Activated CD4-positive, alpha-beta T cell treated with anti-CD3 and anti-CD28 coated beads for 36 hours (primary cell): ENCODE measurements at regions of chr5 and their contacts with region 1.

Region 1: DNA sequence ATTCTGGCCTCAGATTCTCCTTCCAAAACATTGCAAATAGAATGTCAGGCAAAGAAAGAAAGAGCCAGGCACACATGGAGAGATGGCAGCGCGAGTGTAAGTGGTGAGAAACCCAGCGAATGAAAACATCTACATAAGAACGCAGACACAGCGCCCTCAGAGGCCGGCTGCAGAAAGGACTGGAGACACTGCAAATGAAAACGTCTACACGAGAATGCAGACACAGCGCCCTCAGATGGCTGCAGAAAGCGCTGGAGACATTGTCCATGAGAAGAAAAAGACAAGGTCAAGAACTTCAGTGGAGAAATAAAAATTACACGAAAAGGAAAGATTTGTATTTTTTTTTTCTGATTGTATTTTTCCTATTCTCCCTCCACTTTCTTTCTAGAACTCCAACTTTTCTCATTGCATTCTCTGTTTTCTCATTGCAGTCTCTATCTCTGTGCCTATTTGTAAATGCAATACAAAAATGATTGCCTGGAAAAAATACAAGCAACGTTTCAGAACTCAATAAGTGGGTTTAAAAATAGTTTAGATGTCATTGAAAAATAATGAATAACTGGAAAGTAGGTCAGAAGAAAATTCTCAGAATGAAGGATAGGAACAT is 117.9 kb upstream of the LPCAT1 start:
- DNase-seq: peak; percentile 90
- ATAC-seq: peak; percentile 94
- H3K4me3 Mint-ChIP-seq: no peak overlapping the region
- H3K27ac Mint-ChIP-seq: no peak overlapping the region
- H3K4me1 Mint-ChIP-seq: peaks cover 3% of the 10 kb centered on the region
- H3K27me3 Mint-ChIP-seq: peaks cover 23% of the 10 kb centered on the region

Region 2: GRCh38 chr5:1167728-1168709 is 473.6 kb before region 1 on chr5:
- CTCF ChIA-PET with region 1: interaction called, 8 read pairs
- POLR2A ChIA-PET with region 1: no interaction called
- intact Hi-C with region 1: loop called (anchors 1 kb)
- DNase-seq: peak; percentile 80
- ATAC-seq: peak; percentile 85
- H3K4me3 Mint-ChIP-seq: peak overlapping the region; percentile 38
- H3K27ac Mint-ChIP-seq: no peak overlapping the region
- H3K4me1 Mint-ChIP-seq: peaks cover 8% of the 10 kb centered on the region
- H3K27me3 Mint-ChIP-seq: peaks cover 10% of the 10 kb centered on the region

Region 3: GRCh38 chr5:1359713-1360112 is 281.9 kb before region 1 on chr5:
- CTCF ChIA-PET with region 1: no interaction called
- POLR2A ChIA-PET with region 1: interaction called, 12 read pairs
- intact Hi-C with region 1: no loop called
- DNase-seq: no peak
- ATAC-seq: no peak
- H3K4me3 Mint-ChIP-seq: no peak overlapping the region
- H3K27ac Mint-ChIP-seq: no peak overlapping the region
- H3K4me1 Mint-ChIP-seq: no peaks in the 10 kb centered on the region
- H3K27me3 Mint-ChIP-seq: peaks cover 8% of the 10 kb centered on the region

Region 4: DNA sequence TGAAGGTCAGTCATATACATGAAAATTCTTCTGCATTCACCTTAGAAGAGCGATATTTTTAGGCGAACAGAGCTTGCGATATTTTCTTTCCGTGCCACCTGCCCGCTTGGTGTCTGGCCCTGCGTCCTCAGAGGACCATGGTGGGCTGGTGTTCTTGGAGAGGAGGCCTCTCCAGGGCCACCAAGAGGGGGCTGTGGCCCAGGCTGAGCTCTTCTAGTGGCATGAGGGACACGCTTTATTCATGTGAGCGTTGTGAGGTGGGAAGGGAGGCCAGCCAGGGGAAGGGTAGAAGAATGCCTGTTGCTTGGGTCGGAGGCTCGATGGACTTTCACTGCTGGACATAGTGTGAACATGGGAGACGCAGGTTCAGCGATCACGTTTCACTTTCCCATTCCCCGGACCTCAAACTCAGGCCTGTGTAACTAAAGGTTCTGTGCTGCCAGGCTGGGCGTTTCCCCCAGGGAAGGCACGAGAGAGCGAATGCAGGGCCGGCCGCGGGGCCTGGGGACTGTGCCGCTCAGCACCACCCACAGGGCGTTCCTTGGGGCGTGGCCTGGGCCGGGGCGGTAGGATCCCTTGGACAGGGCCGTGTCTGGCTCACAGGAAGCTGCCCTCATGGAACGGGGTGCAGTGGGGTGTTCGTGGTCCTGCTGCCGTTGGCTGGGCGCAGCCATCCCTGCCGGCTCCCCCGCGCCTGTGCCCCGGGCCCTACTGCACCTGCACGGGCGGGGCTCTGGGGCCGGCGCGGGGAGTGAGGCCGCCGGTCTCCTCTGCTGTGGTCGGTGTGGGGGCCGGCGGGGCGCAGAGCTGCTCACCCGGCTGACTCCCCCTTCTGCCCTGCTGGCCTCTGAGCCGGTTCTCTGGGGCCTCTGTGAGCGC is 256.0 kb before region 1 on chr5:
- CTCF ChIA-PET with region 1: interaction called, 18 read pairs
- POLR2A ChIA-PET with region 1: no interaction called
- intact Hi-C with region 1: loop called (anchors 1 to 2 kb)
- DNase-seq: peak; percentile 89
- ATAC-seq: peak; percentile 95
- H3K4me3 Mint-ChIP-seq: peak overlapping the region; percentile 87
- H3K27ac Mint-ChIP-seq: peak overlapping the region; percentile 90
- H3K4me1 Mint-ChIP-seq: peaks cover 23% of the 10 kb centered on the region
- H3K27me3 Mint-ChIP-seq: peaks cover 4% of the 10 kb centered on the region

Region 5: GRCh38 chr5:1536322-1536845 is 105.3 kb before region 1 on chr5:
- CTCF ChIA-PET with region 1: interaction called, 5 read pairs
- POLR2A ChIA-PET with region 1: no interaction called
- intact Hi-C with region 1: loop called in 1 of 2 experiments (anchors 5 kb)
- DNase-seq: peak; percentile 86
- ATAC-seq: peak; percentile 100
- H3K4me3 Mint-ChIP-seq: peak overlapping the region; percentile 72
- H3K27ac Mint-ChIP-seq: peak overlapping the region; percentile 90
- H3K4me1 Mint-ChIP-seq: peaks cover 22% of the 10 kb centered on the region
- H3K27me3 Mint-ChIP-seq: peaks cover 2% of the 10 kb centered on the region

Region 6: DNA sequence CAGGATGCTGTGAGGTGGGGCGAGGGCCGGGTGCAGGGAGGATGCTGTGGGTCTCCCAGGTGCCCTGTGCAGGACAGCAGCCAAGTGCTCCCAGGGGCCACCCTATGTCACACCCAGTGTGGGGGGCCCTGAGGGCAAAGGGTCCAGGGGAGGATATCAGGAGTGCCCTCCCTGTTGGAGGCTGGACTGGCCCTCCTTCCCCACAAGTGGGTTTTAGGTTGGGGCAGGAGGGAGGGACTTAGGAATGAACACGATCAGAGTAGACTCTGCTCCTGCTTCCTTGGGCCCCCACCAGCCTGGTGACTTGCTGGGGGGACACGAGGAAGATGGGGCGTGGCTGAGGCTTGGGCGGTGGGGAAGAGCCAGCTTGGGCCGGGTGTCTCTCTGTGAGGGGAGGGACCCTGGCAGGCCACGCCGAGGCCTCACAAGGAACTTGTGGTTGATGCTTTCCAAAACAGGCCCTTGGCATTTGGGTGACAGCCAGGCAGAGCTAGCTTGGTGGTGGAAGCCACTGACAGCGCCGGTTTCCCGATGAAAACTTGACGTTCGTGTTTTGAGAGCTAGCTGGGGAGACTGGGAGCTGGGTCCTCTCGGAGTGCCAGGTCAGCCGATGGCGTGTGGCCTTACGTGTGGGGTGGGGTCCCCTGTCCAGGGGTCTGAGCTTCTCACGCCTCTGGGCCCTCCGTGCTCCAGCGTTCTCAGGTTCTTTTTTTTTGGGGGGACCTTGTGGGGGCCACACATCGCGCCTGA is 11.1 kb after region 1 on chr5:
- CTCF ChIA-PET with region 1: interaction called, 16 read pairs
- POLR2A ChIA-PET with region 1: no interaction called
- intact Hi-C with region 1: no loop called
- DNase-seq: peak; percentile 27
- ATAC-seq: no peak
- H3K4me3 Mint-ChIP-seq: peak overlapping the region; percentile 44
- H3K27ac Mint-ChIP-seq: no peak overlapping the region
- H3K4me1 Mint-ChIP-seq: peaks cover 3% of the 10 kb centered on the region
- H3K27me3 Mint-ChIP-seq: peaks cover 25% of the 10 kb centered on the region